ENCODE measurements at regions of chr15 and their contacts with region 1.

Region 1: GRCh38 chr15:58761010-58761388 is 10.1 kb upstream of the MINDY2 start:
- DNase-seq: peak; percentile 47
- H3K4me3 Mint-ChIP-seq: no peak overlapping the region
- H3K27ac Mint-ChIP-seq: no peak overlapping the region
- H3K4me1 Mint-ChIP-seq: no peaks in the 10 kb centered on the region
- H3K27me3 Mint-ChIP-seq: peaks cover 31% of the 10 kb centered on the region

Region 2: GRCh38 chr15:58227706-58228543 is 533.1 kb before region 1 on chr15:
- CTCF ChIA-PET with region 1: interaction called, 26 read pairs
- DNase-seq: peak; percentile 82
- H3K4me3 Mint-ChIP-seq: no peak overlapping the region
- H3K27ac Mint-ChIP-seq: no peak overlapping the region
- H3K4me1 Mint-ChIP-seq: peaks cover 16% of the 10 kb centered on the region
- H3K27me3 Mint-ChIP-seq: peaks cover 30% of the 10 kb centered on the region

Region 3: DNA sequence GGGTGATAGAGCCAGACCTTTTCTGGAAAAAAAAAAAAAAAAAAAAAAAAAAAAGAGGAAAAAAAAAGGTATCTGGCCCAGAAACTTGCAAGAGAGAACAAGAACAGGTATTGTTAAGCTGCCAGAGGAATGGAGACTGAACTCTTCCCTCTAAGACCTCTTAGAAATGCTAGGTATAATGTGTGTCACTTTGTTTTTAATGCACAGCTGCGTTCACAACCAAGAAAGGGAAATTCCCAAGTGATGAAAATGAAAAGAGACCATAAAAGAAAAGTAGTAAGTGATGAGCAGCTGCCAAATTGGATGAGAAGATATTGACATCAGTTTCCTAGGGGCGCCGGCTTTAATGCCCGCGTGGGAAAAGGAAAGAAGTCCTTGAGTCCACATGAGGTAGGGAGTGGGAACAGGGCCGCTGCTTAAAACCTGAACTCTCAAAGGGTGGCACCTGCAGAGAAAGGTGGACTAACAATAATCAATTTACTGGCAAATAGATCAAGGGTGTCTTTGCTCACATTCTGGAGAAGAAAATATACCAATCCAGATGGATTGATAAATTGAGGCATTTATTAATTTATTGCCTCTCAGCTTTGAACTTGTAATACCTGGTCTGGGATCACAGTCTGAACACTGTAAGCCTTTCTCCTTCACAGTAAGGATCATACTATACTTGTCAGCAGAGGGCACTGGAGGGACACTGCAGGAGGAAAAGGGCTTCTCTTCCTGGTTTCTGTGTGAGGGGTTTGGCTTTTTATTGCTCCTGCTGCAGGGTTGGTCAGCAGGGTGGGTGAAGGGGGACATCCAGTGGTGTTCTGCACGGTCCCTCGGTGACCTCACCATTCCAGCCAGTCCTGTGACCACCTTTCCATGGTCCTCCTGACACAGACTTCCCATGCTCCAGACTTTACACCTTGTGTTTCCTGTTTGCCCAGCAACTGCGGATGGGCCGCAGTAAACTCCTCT is 491.3 kb before region 1 on chr15:
- CTCF ChIA-PET with region 1: interaction called, 20 read pairs
- DNase-seq: peak; percentile 58
- H3K4me3 Mint-ChIP-seq: no peak overlapping the region
- H3K27ac Mint-ChIP-seq: no peak overlapping the region
- H3K4me1 Mint-ChIP-seq: peaks cover 10% of the 10 kb centered on the region
- H3K27me3 Mint-ChIP-seq: peaks cover 4% of the 10 kb centered on the region

Region 4: GRCh38 chr15:58770857-58771620 is 10.0 kb after region 1 on chr15 and contains the start of gene MINDY2:
- CTCF ChIA-PET with region 1: interaction called, 17 read pairs
- DNase-seq: peak; percentile 97
- H3K4me3 Mint-ChIP-seq: no peak within 1 kb of the TSS
- H3K27ac Mint-ChIP-seq: peak within 1 kb of the TSS; percentile 92
- H3K4me1 Mint-ChIP-seq: peaks cover 16% of the 10 kb centered on the region
- H3K27me3 Mint-ChIP-seq: peaks cover 5% of the 10 kb centered on the region